Activated T-helper 2 cell treated with anti-CD3 and anti-CD28 coated beads, Interferon-gamma antibody, Interleukin-2, Interleukin-4, amounts not matched to agents 10 μg/mL and 5 μg/mL and 100 μg/mL, durations not matched to agents 14 hours and 24 hours and 36 hours (primary cell): ENCODE measurements at regions of chr17 and their contacts with region 1.

Region 1: GRCh38 chr17:76191896-76192295 is 48.4 kb downstream of the RNF157 start:
- DNase-seq: peak; percentile 59
- H3K4me3 Mint-ChIP-seq: peak overlapping the region; percentile 69
- H3K27ac Mint-ChIP-seq: peak overlapping the region; percentile 97
- H3K4me1 Mint-ChIP-seq: peaks cover 59% of the 10 kb centered on the region
- H3K27me3 Mint-ChIP-seq: no peaks in the 10 kb centered on the region

Region 2: GRCh38 chr17:76072148-76072858 is 119.6 kb before region 1 on chr17 and contains the start of gene SRP68:
- intact Hi-C with region 1: loop called (anchors 2 kb)
- DNase-seq: peak; percentile 82
- H3K4me3 Mint-ChIP-seq: peak within 1 kb of the TSS; percentile 99
- H3K27ac Mint-ChIP-seq: peak within 1 kb of the TSS; percentile 100
- H3K4me1 Mint-ChIP-seq: peaks cover 26% of the 10 kb centered on the region
- H3K27me3 Mint-ChIP-seq: peaks cover 34% of the 10 kb centered on the region
- total RNA-seq, gene SRP68: 188 and 194 TPM in 2 replicates

Region 3: DNA sequence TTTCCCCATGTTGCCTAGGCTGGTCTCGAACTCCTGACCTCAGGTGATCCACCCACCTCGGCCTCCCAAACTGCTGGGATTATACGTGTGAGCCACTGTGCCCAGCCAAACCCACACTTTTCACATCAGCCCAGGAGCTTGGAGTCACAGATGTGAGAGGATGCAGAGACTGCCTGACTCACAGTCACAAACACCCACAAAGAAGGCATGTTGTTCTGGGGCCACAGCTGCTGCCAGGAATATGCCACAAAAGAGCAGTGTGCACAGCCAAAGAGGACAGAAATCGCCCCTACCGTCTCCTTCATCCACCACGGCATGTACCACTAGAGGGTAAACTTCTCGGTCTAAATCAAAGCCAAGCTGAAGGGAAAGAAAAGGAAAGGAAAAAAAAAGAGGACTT is 25.7 kb before region 1 on chr17:
- intact Hi-C with region 1: no loop called
- DNase-seq: no peak
- H3K4me3 Mint-ChIP-seq: no peak overlapping the region
- H3K27ac Mint-ChIP-seq: peak overlapping the region; percentile 63
- H3K4me1 Mint-ChIP-seq: peaks cover 6% of the 10 kb centered on the region
- H3K27me3 Mint-ChIP-seq: no peaks in the 10 kb centered on the region

Region 4: DNA sequence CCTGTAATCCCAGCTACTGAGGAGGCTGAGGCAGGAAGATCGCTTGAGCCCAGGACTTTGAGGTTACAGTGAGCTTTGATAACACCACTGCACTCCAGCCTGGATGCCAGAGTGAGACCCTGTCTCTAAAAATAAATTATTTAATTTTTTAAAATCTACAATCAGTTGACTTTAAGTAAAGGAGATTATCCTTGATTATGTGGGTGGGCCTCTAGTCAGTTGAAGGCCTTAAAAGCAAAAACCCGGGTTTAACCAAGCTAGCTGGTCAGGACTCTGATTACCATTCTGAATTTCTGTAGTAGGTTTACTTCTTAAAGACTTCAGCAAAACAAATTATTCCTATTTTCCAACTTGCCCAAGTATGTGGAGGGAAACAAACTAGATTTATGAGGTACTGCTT is 44.0 kb after region 1 on chr17:
- intact Hi-C with region 1: no loop called
- DNase-seq: no peak
- H3K4me3 Mint-ChIP-seq: no peak overlapping the region
- H3K27ac Mint-ChIP-seq: no peak overlapping the region
- H3K4me1 Mint-ChIP-seq: peaks cover 32% of the 10 kb centered on the region
- H3K27me3 Mint-ChIP-seq: no peaks in the 10 kb centered on the region

Region 5: DNA sequence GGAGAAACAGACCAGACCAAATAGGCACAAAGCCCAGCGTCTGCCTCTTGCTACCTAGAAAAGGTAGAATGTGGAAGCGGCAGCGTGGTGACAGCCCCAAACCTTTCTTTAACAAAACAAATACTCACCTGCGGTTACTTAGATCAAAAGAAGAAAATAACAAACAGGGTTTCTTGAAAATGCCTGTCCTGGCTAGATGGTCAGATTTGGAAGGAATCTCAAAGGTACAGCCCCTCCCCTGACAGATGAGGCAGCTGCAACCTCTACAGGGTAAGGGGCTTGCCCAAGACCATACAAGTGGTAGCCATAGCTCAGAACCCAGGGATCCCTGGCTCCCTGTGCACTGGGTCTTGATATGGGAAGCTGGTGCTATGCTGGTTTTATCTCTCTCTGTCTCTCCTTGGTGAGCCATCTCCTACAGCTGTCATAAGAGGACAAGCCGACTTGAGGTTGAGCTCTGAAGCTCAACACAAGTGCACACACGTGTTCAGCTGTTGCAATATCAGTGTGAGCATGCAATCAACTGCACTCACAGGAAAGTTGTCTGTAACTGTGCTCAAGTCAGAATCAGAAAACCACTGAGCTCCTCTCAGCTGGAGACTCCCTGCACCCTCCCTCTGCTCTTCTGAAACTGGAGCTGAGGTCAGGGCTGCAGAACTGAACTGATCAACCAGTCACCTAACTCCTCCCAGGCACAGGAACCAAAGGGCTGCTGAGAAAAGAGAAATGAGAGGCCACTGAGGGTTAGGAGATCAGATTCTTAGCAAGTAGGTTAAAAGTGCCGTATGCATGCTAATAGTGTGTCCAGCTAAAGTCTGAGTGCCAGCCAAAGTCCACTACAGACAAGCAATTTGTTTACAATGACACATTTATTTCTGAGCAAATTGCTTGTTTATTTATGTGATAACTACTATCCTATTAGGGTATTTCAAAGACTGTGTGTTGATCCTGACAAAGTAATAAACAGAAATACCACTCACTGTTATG is 54.5 kb after region 1 on chr17:
- intact Hi-C with region 1: loop called (anchors 1 kb)
- DNase-seq: peak; percentile 81
- H3K4me3 Mint-ChIP-seq: peak overlapping the region; percentile 64
- H3K27ac Mint-ChIP-seq: peak overlapping the region; percentile 92
- H3K4me1 Mint-ChIP-seq: peaks cover 59% of the 10 kb centered on the region
- H3K27me3 Mint-ChIP-seq: no peaks in the 10 kb centered on the region

Region 6: GRCh38 chr17:76264755-76265596 is 73.1 kb after region 1 on chr17 and contains the start of gene UBALD2:
- intact Hi-C with region 1: loop called (anchors 1 kb)
- DNase-seq: peak; percentile 100
- H3K4me3 Mint-ChIP-seq: peak within 1 kb of the TSS; percentile 91
- H3K27ac Mint-ChIP-seq: peak within 1 kb of the TSS; percentile 96
- H3K4me1 Mint-ChIP-seq: peaks cover 55% of the 10 kb centered on the region
- H3K27me3 Mint-ChIP-seq: no peaks in the 10 kb centered on the region
- total RNA-seq, gene UBALD2: 204 and 212 TPM in 2 replicates

Region 7: DNA sequence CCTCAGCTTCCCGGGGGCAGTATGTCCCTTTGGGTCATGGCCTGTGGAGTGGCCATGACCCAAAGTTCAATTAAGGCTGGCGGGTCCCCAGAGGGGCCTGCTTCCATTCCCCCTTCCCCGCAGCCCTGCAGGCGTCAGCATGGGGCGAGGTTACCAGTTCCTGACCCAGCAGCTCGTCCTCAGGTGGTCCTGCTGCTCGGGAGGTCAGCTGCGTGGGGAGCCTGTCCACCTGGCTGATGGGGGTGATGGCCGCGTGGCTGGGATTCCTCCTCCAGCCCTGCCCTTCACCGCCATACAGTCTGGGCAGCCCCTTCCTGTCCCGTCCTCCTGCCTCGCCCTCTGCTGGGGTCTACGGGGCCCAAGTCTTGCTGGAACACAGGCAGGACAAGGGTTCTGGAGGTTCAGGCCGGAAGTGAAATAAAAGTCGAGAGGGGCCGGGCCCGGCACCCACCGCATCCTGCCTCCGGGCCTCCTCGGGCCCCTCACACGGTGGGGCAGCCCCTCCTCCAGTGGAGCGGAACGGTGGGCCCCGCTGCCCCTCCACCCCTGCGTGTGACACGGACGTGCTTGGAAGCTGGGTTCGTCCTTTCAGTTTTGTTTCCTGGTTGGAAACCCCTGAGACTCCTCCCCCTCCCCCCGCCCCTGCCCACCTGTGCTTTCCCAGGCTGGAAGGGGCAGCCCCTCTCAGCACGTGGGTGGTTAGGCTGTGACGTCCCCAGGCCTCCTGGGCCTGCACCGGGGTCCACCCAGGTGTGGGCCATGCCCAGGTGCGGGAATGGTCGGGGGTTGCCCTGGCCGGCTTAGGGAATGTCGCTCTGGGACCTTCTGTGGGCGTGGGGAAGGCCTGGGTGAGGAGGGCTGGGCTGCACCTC is 80.0 kb after region 1 on chr17:
- intact Hi-C with region 1: loop called (anchors 1 kb)
- DNase-seq: peak; percentile 69
- H3K4me3 Mint-ChIP-seq: peak overlapping the region; percentile 79
- H3K27ac Mint-ChIP-seq: peak overlapping the region; percentile 90
- H3K4me1 Mint-ChIP-seq: peaks cover 47% of the 10 kb centered on the region
- H3K27me3 Mint-ChIP-seq: no peaks in the 10 kb centered on the region

Region 8: DNA sequence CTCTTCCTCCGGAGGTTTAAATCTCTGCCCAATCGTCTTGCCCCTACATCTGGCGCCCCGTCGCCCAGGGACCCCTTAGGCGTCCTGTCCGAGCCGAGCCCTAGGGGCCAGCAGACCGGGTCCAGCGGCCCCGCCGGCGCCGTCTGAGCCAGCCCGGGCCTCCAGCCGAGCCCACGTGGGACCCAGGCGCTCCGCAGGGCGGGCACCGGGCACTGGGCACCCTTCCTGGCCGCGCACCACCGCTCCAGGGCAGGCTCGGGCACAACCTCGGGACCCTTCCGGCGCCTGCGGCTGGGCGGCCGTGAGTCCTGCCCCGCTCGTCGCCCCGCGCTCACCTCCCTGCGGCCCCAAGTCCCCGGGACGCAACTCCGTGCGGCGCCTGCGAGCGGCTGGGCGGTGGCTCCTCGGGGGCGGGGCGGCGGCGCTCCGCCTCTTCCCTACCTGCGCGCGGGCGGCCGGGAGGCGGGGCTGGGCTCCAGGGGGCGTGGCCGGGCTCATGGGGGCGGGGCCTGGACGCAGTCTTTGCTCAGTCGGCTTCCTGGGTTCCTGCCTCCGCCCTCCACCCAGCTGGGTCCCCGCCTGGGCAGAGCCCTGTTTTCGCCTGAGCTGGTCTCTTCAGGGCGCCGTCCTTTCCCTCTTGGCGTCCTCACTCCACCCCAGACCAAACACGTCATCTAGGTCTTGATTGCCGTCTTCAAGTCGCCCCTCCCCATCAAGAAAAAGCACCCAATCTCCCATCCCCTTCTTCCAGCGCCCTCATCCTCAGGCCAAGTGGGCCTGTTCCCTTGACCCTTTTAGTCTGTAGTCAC is 309.3 kb after region 1 on chr17 and contains the start of gene RHBDF2:
- intact Hi-C with region 1: loop called (anchors 5 kb)
- DNase-seq: peak; percentile 94
- H3K4me3 Mint-ChIP-seq: peak within 1 kb of the TSS; percentile 88
- H3K27ac Mint-ChIP-seq: peak within 1 kb of the TSS; percentile 92
- H3K4me1 Mint-ChIP-seq: peaks cover 20% of the 10 kb centered on the region
- H3K27me3 Mint-ChIP-seq: no peaks in the 10 kb centered on the region
- total RNA-seq, gene RHBDF2: 45.3 and 48.5 TPM in 2 replicates